ENCODE measurements at regions of chr7 and their contacts with region 1.

Region 1: DNA sequence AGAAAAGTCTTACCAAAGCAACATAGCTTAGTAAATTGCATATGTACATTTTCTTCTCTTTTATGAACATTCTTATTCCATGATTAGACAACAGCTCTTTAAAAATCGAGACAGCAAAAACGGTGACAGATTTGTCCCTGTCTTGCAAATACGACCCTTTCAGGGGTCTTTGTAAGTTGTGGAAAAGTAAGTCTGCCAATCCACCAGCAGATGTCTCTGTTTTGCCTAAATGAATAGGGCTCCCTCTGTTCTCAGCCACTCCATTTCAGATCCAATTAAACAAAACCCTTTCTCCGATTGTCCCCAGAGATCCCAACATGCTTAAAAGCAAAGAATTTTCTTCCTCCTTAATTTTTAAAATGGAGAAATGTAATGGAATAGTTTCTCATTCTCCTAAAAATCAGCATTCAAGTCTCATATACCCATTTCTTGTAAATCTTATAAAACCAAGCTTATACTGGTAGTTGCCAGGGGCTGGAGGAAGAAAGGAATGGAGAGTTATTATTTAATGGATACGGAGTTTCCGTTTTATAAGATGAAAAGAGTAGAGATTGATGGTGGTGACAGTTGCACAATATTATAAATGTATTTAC is 61.0 kb upstream of the NFE2L3 start:
- DNase-seq: peak; percentile 26
- H3K4me3 ChIP-seq: no peak overlapping the region
- CTCF ChIP-seq: peak; percentile 57

Region 2: DNA sequence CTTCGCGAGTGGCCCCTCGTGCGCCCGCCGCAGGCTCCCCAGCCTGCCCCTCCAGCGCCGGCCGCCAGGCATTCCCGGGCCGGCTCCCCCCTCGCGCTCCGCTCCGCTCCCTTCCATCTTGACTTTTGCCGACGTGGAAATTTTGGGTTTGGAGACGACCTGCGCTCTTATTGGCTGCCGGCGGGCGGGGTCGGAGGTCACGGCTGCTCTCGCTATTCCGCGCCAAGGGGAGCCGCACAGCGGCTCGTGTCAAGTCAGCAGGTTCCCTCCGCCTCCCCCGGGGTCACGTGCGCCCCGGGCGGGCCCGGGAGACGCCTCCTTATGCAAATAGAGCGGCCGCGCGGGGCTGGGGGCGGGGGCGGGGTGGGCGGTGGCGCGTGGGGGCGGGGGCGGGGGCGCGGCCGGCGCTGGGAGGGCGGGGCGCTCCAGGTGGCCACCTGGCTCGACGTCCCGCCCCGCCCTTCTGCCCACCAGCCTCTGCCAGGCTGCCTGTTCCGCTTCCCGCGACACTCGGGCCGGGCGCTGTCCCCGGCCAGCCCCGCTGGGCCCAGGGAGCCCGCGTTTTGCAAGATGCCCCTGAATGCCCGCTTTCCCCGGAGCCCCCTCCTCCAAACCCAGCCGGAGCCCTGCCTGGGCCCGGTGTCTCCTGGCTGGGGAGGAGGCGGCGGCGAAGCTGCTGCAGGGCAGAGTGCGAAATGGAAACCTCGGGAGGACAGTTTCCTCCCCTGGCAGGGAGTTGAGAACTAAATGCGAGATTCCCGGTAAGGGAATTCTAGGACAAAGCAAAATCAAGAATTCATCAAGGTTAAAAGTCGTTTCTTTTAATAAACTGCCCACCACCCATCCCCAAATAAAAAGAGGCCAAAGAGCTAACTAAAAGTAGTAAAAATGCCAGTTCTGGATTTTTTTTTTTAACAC is 139.7 kb before region 1 on chr7:
- CTCF ChIA-PET with region 1: no interaction called
- POLR2A ChIA-PET with region 1: no interaction called
- DNase-seq: no peak
- H3K4me3 ChIP-seq: peak overlapping the region; percentile 61
- CTCF ChIP-seq: no peak

Region 3: GRCh38 chr7:26051021-26051420 is 40.0 kb before region 1 on chr7:
- CTCF ChIA-PET with region 1: no interaction called
- POLR2A ChIA-PET with region 1: no interaction called
- DNase-seq: no peak
- H3K4me3 ChIP-seq: no peak overlapping the region
- CTCF ChIP-seq: no peak

Region 4: DNA sequence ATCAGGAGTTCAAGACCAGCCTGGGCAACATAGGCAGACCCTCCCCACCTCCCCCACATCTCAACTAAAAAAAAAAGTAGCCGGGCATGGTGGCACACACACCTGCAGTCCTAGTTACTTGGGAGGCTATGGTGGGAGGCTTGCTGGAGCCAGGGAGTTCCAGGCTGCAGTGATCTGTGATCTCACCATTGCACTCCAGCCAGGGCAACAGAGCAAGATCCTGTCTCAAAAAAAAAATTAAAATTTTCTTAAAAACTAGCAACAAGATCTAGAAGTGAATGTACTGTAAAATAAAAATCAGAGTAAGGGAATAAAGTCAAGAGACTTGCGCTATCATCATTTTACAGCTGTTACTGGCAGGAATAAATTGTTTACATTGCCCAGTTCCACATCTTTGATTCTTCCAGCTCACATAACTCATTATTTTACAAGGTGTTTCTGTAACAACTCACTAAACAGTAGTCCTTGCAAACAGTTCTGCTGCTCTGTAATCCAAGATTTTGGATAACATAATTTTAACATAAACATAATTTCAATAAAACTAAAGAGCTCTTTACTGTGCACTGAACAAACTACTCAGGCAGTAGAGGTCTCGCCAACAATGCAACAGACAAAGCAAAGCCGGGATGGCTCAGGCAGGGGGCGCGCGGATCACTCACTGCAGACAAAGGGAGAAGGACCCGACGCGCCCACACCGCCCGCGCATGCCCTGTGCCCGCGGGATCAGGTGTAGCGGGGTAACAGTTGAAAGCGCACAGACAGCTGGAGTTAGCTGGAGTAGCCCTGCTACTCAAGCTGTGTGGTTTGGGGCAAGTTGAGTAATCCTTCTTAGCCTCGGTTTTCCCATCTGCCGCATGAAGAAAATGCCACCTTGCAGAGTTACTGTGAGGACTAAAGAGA is 12.3 kb before region 1 on chr7:
- CTCF ChIA-PET with region 1: interaction called, 26 read pairs
- POLR2A ChIA-PET with region 1: no interaction called
- DNase-seq: no peak
- H3K4me3 ChIP-seq: no peak overlapping the region
- CTCF ChIP-seq: peak; percentile 35

Region 5: GRCh38 chr7:26101361-26102151 is 10.5 kb after region 1 on chr7:
- CTCF ChIA-PET with region 1: interaction called, 18 read pairs
- POLR2A ChIA-PET with region 1: no interaction called
- DNase-seq: no peak
- H3K4me3 ChIP-seq: no peak overlapping the region
- CTCF ChIP-seq: no peak

Region 6: DNA sequence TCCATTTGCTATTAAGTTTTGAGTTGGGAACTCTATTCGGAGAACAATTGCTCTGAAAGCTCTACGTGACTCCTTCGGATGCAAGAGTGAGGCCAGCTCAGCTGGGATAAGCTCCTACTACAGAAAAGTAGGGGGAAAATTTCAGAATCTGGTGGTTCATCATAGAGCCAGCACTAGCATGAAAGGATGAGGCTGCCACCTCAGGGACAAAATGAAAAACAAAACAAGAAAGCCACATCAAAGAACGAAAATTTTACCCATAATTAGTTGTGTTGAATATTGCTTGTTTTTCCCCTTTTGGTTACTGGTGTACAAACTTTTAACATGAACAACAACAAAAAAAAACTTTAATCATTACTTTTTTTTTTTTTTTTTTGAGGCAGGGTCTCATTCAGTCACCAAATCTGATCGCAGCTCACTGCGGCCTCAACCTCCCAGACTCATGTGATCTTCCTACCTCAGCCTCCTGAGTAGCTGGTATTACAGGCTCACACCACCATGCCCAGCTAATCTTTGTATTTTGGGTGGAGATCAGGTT is 21.2 kb after region 1 on chr7:
- CTCF ChIA-PET with region 1: interaction called, 21 read pairs
- POLR2A ChIA-PET with region 1: no interaction called
- DNase-seq: no peak
- H3K4me3 ChIP-seq: no peak overlapping the region
- CTCF ChIP-seq: no peak

Region 7: DNA sequence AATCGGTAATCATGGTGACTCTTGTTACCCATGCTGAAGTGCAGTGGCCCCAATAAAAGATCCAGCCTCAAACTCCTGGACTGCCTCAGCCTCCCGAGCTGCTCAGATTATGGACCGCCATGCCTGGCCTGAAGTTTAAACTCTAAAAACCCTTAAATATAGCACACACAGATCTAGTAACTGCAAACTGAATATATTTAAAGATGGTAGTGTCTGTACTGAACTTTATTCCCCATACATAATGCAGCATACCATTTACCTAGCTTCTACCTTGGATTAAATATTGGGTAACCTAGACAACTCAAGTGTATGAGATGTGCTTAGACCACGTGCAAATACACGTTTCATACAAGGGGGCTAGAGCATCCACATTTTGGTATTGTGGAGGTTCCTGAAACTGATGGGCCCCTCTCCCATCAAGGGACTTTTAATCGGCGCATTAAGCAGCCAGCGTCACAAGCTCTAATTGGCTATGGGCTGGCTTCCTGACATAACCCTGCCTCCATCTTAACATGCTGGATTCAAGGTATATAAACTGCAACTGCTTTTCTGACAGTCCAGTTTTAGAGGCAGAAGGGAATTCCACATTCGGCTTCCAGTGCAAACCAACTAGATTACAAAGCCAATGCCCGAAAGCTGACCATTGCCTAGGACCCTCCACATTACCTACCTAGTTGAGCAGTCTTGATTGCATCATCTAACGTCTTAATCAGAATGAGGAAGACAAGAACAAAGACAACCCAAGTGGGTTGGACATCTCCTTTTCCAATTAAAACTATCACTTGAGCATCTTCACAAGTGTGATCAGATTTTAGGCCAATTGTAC is 96.6 kb after region 1 on chr7:
- CTCF ChIA-PET with region 1: interaction called, 174 read pairs
- POLR2A ChIA-PET with region 1: interaction called, 3 read pairs
- DNase-seq: no peak
- H3K4me3 ChIP-seq: no peak overlapping the region
- CTCF ChIP-seq: no peak

Region 8: GRCh38 chr7:26200444-26201246 is 109.6 kb after region 1 on chr7 and contains the start of gene HNRNPA2B1:
- CTCF ChIA-PET with region 1: interaction called, 174 read pairs
- POLR2A ChIA-PET with region 1: interaction called, 7 read pairs
- DNase-seq: peak; percentile 93
- H3K4me3 ChIP-seq: peak within 1 kb of the TSS; percentile 98
- CTCF ChIP-seq: no peak

Region 9: GRCh38 chr7:26250239-26250638 is 159.2 kb after region 1 on chr7:
- CTCF ChIA-PET with region 1: no interaction called
- POLR2A ChIA-PET with region 1: no interaction called
- DNase-seq: no peak
- H3K4me3 ChIP-seq: no peak overlapping the region
- CTCF ChIP-seq: no peak

Region 10: DNA sequence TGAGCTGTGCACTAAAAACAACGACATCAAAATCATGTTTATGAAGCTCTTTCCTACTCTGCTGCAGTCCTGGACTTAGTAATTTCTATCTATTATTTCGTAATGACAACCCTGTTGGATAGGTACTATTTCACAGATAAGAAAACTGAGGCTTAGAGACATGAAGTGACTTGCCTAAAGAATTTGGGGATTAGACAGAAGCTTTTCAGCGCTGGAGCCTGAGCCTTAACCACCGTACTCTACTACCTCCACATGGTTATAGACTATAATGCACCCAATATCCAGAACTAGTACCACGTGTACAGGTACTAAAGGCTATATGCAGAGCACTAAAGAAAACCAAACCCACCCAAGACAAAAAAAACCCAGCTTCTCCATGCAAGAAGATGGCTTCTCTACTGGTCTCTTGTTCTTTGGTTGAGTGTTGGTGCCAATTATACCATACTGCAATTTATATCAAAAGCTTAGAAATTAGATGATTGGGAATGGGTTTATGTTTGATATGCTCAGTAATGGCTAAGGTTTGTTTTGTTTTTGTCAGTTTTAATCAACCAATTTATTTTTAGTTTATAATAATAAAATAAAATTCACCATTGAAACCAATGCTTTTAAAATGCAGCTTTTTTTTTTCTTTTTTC is 194.1 kb after region 1 on chr7:
- CTCF ChIA-PET with region 1: interaction called, 17 read pairs
- POLR2A ChIA-PET with region 1: no interaction called
- DNase-seq: no peak
- H3K4me3 ChIP-seq: no peak overlapping the region
- CTCF ChIP-seq: no peak